ENCODE measurements at regions of chr9 and their contacts with region 1.

Region 1: GRCh38 chr9:86732514-86733171 is 214.7 kb downstream of the GAS1 start:
- DNase-seq: peak; percentile 81
- H3K4me3 ChIP-seq: no peak overlapping the region
- H3K27ac ChIP-seq: peak overlapping the region; percentile 48 to 65 (median 52)
- H3K4me1 ChIP-seq: peaks cover 0 to 53% (median 36%) of the 10 kb centered on the region in 4 donors
- H3K27me3 ChIP-seq: no peaks in the 10 kb centered on the region
- CTCF ChIP-seq: no peak
- EP300 ChIP-seq: no peak
- POLR2A ChIP-seq: no peak

Region 2: GRCh38 chr9:86304236-86304730 is 428.4 kb before region 1 on chr9:
- intact Hi-C with region 1: no loop called
- DNase-seq: no peak
- H3K4me3 ChIP-seq: no peak overlapping the region
- H3K27ac ChIP-seq: no peak overlapping the region
- H3K4me1 ChIP-seq: no peaks in the 10 kb centered on the region
- H3K27me3 ChIP-seq: no peaks in the 10 kb centered on the region
- CTCF ChIP-seq: no peak
- EP300 ChIP-seq: no peak
- POLR2A ChIP-seq: no peak

Region 3: GRCh38 chr9:86500667-86501435 is 231.8 kb before region 1 on chr9:
- intact Hi-C with region 1: loop called (anchors 10 kb)
- DNase-seq: no peak
- H3K4me3 ChIP-seq: no peak overlapping the region
- H3K27ac ChIP-seq: peak overlapping the region; percentile 25 to 66 (median 52)
- H3K4me1 ChIP-seq: peaks cover 0 to 25% (median 17%) of the 10 kb centered on the region in 4 donors
- H3K27me3 ChIP-seq: no peaks in the 10 kb centered on the region
- CTCF ChIP-seq: no peak
- EP300 ChIP-seq: no peak
- POLR2A ChIP-seq: no peak

Region 4: DNA sequence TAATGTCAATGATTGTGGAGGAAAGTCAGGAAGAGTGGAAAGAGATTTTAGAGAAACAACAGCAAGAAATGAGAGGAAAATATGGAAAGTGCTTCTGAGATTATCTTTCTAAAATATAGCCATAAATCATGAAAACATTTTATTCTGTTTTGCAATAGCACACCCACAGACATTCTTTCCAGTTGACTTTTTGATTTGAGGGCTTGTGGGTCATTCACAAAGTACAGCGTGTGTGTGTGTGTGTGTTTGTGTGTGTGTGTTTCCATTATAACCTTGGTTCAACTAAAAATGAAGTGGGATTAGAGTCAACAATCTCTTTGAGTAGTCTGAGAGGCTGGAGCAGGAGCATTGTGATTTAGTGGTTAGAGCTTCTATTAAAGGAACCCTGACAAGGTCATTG is 331.2 kb after region 1 on chr9:
- intact Hi-C with region 1: no loop called
- DNase-seq: no peak
- H3K4me3 ChIP-seq: no peak overlapping the region
- H3K27ac ChIP-seq: peak overlapping the region in 2 of 4 donors; percentile 18 to 52
- H3K4me1 ChIP-seq: peaks cover 0 to 32% (median 25%) of the 10 kb centered on the region in 4 donors
- H3K27me3 ChIP-seq: no peaks in the 10 kb centered on the region
- CTCF ChIP-seq: no peak
- EP300 ChIP-seq: no peak
- POLR2A ChIP-seq: no peak

Measured in sigmoid colon (tissue), 7 donors.